ENCODE measurements at regions of chr14 and their contacts with region 1.

Region 1: DNA sequence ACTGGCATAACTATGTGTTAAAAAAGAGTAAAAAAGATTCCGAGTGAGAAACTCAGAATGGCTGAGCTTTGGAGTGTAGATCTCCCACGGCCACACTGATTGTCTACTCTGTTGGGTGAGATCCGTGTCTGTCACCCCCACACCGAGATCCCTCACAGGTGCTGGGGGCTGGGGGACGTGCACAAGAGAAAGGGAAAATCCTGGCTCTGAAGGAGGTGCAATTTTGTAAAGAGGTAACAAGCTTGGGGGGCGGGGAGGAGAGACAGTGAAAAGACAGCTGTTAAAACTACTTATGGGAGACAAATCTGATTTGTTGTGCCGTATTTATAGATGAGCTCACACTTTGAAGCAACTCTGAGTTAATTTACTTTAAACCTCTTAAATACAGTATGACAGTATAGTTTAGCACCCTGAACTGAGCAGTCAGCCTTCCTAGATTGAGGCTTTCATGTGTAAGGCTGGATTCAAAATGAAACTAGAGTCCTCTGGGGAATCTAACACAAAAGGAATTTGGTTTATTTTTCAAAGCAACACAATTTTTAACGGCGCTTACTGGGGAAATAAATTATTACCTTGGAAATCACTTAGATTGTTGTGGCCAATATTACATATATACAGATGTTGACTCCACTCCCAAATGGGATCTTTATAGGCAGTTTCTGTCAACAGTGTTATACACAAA is 167.4 kb upstream of the RGS6 start:
- DNase-seq: no peak
- H3K4me3 ChIP-seq: no peak overlapping the region
- H3K27ac ChIP-seq: no peak overlapping the region
- H3K4me1 ChIP-seq: no peaks in the 10 kb centered on the region
- H3K27me3 ChIP-seq: no peaks in the 10 kb centered on the region
- CTCF ChIP-seq: no peak

Region 2: DNA sequence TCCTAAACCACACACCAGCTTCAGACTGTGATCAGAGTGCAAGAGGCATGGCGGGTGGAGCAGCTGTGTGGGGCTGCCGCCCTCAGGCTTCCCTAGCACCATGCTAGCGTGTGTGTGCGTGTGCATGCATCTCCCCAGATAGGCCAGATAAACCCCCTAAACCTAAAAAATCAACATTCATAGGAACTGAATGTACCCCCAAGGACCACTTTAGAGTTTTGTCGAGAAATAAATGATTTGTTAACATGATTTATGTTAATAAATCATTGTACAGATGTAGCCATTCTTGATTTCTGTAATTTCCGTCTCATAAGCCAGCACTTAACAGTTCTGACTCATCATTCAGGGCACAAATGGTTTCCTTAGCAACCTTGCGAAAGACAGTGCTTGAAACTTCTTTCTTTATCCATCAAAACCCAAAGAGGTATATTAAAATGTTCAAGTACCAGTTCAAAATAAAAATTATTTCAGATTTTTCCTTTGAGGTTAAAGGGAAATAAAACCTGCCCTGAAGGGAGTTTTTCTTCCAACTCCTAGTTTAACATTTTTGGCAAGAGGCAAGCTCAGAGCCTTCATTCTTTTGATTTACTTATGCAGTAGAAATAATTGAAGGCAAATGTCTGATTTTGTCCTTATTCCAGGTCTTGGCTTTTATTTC is 38.8 kb before region 1 on chr14:
- CTCF ChIA-PET with region 1: no interaction called
- POLR2A ChIA-PET with region 1: no interaction called
- intact Hi-C with region 1: no loop called
- DNase-seq: no peak
- H3K4me3 ChIP-seq: no peak overlapping the region
- H3K27ac ChIP-seq: no peak overlapping the region
- H3K4me1 ChIP-seq: no peaks in the 10 kb centered on the region
- H3K27me3 ChIP-seq: no peaks in the 10 kb centered on the region
- CTCF ChIP-seq: no peak

Region 3: GRCh38 chr14:72023722-72024407 is 259.0 kb after region 1 on chr14:
- CTCF ChIA-PET with region 1: interaction called, 15 read pairs
- POLR2A ChIA-PET with region 1: no interaction called
- intact Hi-C with region 1: no loop called
- DNase-seq: no peak
- H3K4me3 ChIP-seq: no peak overlapping the region
- H3K27ac ChIP-seq: no peak overlapping the region
- H3K4me1 ChIP-seq: no peaks in the 10 kb centered on the region
- H3K27me3 ChIP-seq: peaks cover 23% of the 10 kb centered on the region; the same call in 1 of the 2 replicates
- CTCF ChIP-seq: peak; percentile 58